ENCODE measurements at regions of chr5 and their contacts with region 1.

Region 1: GRCh38 chr5:149561848-149562247 is 10.6 kb upstream of the CSNK1A1 start:
- DNase-seq: no peak
- H3K4me3 ChIP-seq: no peak overlapping the region
- H3K4me3 Mint-ChIP-seq: no peak overlapping the region
- H3K27ac ChIP-seq: peak overlapping the region; percentile 20
- H3K27ac Mint-ChIP-seq: no peak overlapping the region
- H3K4me1 ChIP-seq: peaks cover 20% of the 10 kb centered on the region
- H3K4me1 Mint-ChIP-seq: no peaks in the 10 kb centered on the region
- H3K27me3 ChIP-seq: no peaks in the 10 kb centered on the region
- H3K27me3 Mint-ChIP-seq: no peaks in the 10 kb centered on the region

Region 2: GRCh38 chr5:149381987-149382340 is 179.9 kb before region 1 on chr5:
- CTCF ChIA-PET with region 1: interaction called, 16 read pairs
- POLR2A ChIA-PET with region 1: interaction called, 4 read pairs
- DNase-seq: peak; percentile 39 to 74 (median 55)
- H3K4me3 ChIP-seq: no peak overlapping the region
- H3K4me3 Mint-ChIP-seq: no peak overlapping the region
- H3K27ac ChIP-seq: no peak overlapping the region
- H3K27ac Mint-ChIP-seq: peak overlapping the region in 1 of 8 donors; percentile 39
- H3K4me1 ChIP-seq: no peaks in the 10 kb centered on the region
- H3K4me1 Mint-ChIP-seq: peaks cover 0 to 6% (median 4%) of the 10 kb centered on the region in 3 donors
- H3K27me3 ChIP-seq: no peaks in the 10 kb centered on the region
- H3K27me3 Mint-ChIP-seq: peaks cover 9 to 18% of the 10 kb centered on the region in 2 donors

Region 3: GRCh38 chr5:149387081-149387631 is 174.7 kb before region 1 on chr5:
- CTCF ChIA-PET with region 1: interaction called, 16 read pairs
- POLR2A ChIA-PET with region 1: interaction called, 4 read pairs
- DNase-seq: no peak
- H3K4me3 ChIP-seq: no peak overlapping the region
- H3K4me3 Mint-ChIP-seq: no peak overlapping the region
- H3K27ac ChIP-seq: no peak overlapping the region
- H3K27ac Mint-ChIP-seq: no peak overlapping the region
- H3K4me1 ChIP-seq: no peaks in the 10 kb centered on the region
- H3K4me1 Mint-ChIP-seq: no peaks in the 10 kb centered on the region
- H3K27me3 ChIP-seq: no peaks in the 10 kb centered on the region
- H3K27me3 Mint-ChIP-seq: peaks cover 5 to 6% of the 10 kb centered on the region in 2 donors

Region 4: DNA sequence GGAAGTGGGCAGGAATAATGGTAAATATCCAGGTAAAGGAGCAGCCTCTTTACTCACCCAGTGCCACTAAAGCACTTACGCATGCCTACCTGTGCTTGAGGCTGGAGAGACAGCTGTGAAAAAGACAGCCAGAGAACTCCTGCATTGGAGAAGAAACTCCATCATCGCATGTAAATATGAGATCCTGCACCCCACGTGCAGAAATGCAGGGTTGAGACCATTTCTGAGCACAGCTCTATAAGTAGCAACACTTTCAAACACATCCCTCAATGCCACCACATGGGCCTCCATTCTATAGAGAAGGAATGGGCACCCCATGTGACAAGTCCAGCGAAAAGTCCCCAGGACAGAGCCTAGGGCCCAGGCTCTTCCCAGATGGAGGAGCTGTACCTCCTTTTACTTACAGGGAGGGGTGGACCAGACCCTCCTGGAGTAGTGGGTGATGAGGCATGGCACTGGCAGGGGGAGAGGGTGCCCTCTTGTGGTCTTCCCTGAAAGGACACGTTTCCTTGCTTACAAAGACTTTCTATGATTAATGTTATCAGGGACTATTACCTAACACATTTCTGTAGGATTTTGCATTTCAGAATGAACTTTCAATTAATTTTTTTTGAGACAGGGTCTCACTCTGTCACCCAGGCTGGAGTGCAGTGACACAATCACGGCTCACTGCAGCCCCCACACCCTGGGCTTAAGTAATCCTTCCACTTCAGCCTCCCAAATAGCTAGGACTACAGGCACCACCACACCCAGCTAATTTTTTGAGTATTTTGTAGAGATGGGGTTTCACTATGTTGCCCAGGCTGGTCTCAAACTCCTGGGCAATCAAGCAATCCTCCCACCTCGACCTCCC is 127.5 kb before region 1 on chr5:
- CTCF ChIA-PET with region 1: interaction called, 25 read pairs
- POLR2A ChIA-PET with region 1: no interaction called
- DNase-seq: peak in 4 of 5 donors; percentile 11 to 49 (median 24)
- H3K4me3 ChIP-seq: no peak overlapping the region
- H3K4me3 Mint-ChIP-seq: no peak overlapping the region
- H3K27ac ChIP-seq: no peak overlapping the region
- H3K27ac Mint-ChIP-seq: no peak overlapping the region
- H3K4me1 ChIP-seq: no peaks in the 10 kb centered on the region
- H3K4me1 Mint-ChIP-seq: no peaks in the 10 kb centered on the region
- H3K27me3 ChIP-seq: no peaks in the 10 kb centered on the region
- H3K27me3 Mint-ChIP-seq: peaks cover 0 to 10% of the 10 kb centered on the region in 2 donors

Region 5: DNA sequence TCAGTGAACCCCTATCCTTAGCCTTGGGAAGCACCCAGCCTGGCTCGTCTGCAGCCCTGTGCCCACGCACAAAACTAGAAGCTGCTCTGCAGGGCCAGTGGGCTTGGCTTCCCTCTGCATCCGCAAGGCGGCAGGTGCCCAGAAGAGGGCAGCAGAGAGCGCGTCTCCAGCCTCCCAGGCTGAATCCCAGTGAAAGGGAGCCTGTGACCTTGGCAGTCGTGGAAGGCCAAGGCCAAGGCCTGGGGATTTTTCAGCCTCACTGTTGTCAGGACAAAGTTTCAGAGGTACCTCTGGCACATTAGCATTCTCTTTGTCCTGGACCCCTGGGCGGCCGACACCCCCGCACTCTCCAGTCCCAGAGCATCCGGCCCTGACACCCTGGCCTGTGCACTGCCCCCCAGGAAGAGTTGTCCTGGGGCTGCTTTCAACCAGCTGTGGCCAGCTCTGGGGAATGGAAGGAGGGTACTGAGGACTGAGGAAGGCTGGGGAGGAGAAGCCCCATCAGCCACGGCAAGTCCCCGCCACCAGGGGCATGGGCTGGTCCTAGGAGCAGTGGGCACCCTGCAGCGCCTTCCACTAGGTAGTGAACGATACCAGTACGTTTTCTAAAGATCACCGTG is 119.2 kb before region 1 on chr5:
- CTCF ChIA-PET with region 1: interaction called, 25 read pairs
- POLR2A ChIA-PET with region 1: no interaction called
- DNase-seq: peak; percentile 39 to 73 (median 60)
- H3K4me3 ChIP-seq: no peak overlapping the region
- H3K4me3 Mint-ChIP-seq: no peak overlapping the region
- H3K27ac ChIP-seq: no peak overlapping the region
- H3K27ac Mint-ChIP-seq: no peak overlapping the region
- H3K4me1 ChIP-seq: no peaks in the 10 kb centered on the region
- H3K4me1 Mint-ChIP-seq: peaks cover 2 to 6% (median 3%) of the 10 kb centered on the region in 3 donors
- H3K27me3 ChIP-seq: no peaks in the 10 kb centered on the region
- H3K27me3 Mint-ChIP-seq: peaks cover 3 to 5% of the 10 kb centered on the region in 2 donors

Region 6: DNA sequence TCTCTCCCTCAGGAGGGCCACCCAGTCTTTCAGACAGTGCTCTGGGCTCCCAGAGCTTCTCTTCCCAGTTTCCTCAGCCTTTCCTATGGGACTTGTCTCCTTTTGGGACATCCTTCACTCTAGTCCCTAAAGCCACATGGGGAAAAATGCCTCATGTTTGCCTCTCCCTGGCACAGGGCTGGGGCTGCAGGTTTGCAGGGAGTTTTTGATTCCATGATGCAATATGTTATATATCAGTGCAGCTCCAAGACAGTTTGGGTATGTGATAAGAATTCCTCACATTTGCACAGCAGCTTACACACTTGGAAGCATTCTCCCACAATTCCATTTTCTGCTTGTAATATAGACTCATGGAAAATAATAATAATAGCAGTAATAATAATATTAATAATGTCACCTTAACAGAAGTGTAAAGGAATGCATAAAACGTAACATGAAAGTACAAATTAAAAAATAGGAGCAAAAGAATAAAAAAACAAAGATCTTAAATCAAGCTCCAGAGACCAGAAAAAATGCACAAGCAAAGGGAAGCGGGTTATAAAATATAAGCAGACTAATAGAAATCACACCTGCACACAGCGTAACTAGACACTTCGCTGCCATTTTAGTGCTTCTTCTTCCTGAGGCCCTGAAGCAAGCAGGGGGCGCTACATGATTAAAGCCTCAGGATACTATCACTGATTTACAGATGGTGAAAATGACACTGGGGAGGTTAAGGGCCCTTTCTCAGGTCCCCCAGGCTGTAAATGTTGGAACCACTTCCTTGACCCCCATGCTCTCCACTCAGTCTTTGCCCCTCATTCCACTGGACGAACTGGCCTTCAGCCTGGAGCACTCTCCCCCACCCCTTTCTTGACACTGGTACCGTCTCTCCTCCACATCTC is 112.8 kb before region 1 on chr5:
- CTCF ChIA-PET with region 1: interaction called, 17 read pairs
- POLR2A ChIA-PET with region 1: no interaction called
- DNase-seq: no peak
- H3K4me3 ChIP-seq: no peak overlapping the region
- H3K4me3 Mint-ChIP-seq: no peak overlapping the region
- H3K27ac ChIP-seq: no peak overlapping the region
- H3K27ac Mint-ChIP-seq: peak overlapping the region in 1 of 8 donors; percentile 5
- H3K4me1 ChIP-seq: no peaks in the 10 kb centered on the region
- H3K4me1 Mint-ChIP-seq: no peaks in the 10 kb centered on the region
- H3K27me3 ChIP-seq: no peaks in the 10 kb centered on the region
- H3K27me3 Mint-ChIP-seq: peaks cover 6 to 7% of the 10 kb centered on the region in 2 donors

Region 7: DNA sequence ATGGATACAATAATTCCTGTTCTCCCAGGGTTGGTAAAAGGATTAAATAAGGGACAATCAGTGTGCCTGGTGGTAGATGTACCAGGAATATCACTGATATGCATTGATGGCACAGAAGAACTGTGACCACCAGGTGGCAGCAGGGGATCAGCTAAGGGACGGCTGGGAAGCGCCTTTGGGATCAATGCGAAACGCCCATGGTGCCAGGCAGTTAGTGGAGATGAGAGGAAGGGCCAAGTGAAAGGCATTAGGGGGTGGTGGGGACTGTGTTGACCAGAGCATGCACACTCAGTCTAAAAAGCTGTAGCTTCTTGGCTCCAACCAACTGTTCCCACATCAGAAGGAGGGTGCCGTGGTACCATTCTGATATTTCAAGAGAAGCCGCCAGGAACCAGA is 75.0 kb after region 1 on chr5:
- CTCF ChIA-PET with region 1: no interaction called
- POLR2A ChIA-PET with region 1: no interaction called
- DNase-seq: peak in 4 of 5 donors; percentile 47 to 71 (median 51)
- H3K4me3 ChIP-seq: no peak overlapping the region
- H3K4me3 Mint-ChIP-seq: no peak overlapping the region
- H3K27ac ChIP-seq: no peak overlapping the region
- H3K27ac Mint-ChIP-seq: no peak overlapping the region
- H3K4me1 ChIP-seq: no peaks in the 10 kb centered on the region
- H3K4me1 Mint-ChIP-seq: peaks cover 0 to 3% (median 0%) of the 10 kb centered on the region in 3 donors
- H3K27me3 ChIP-seq: no peaks in the 10 kb centered on the region
- H3K27me3 Mint-ChIP-seq: peaks cover 0 to 2% of the 10 kb centered on the region in 2 donors

Measured in CD8-positive, alpha-beta memory T cell (primary cell).